AG04450 (cell line): ENCODE measurements at regions of chr17 and their contacts with region 1.

Region 1: GRCh38 chr17:27430882-27431491 is 25.3 kb upstream of the KSR1 start:
- DNase-seq: no peak
- H3K4me3 ChIP-seq: no peak overlapping the region
- H3K27ac ChIP-seq: no peak overlapping the region
- H3K27me3 ChIP-seq: no peaks in the 10 kb centered on the region
- CTCF ChIP-seq: peak; percentile 81

Region 2: GRCh38 chr17:27265333-27265732 is 165.7 kb before region 1 on chr17:
- CTCF ChIA-PET with region 1: no interaction called
- POLR2A ChIA-PET with region 1: no interaction called
- DNase-seq: no peak
- H3K4me3 ChIP-seq: no peak overlapping the region
- H3K27ac ChIP-seq: no peak overlapping the region
- H3K27me3 ChIP-seq: peaks cover 21% of the 10 kb centered on the region
- CTCF ChIP-seq: no peak

Region 3: DNA sequence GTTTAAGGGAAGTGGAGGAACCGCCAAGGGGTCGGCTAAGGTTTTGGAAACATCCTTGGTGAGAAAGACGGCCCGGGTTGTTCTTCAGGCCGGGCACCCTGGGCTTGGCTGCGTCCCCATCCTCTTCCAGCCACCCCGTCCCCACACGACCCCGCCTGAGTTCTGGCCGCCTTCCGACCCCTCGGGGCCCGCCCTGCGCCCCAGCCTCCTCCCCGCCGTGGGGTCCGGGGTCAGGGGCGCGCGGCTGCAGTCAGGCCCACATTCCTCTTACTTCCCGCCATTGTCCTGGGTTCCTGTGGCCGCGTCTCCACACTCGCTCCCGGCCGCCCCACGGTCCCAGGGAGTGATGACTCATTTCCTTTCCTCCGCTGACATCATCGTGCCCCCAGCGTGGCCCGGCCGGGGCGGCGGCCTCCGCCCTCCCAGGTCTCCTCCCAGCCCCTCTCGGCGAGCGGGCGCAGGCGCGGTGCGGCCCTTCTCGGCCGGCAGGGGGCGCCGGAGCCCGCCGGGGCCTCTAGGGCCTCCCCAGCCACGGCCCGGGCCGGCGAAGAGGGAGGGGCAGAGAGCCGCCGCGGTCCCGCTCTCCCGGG is 77.4 kb before region 1 on chr17:
- CTCF ChIA-PET with region 1: interaction called, 10 read pairs
- POLR2A ChIA-PET with region 1: no interaction called
- DNase-seq: peak; percentile 81
- H3K4me3 ChIP-seq: peak overlapping the region; percentile 69
- H3K27ac ChIP-seq: peak overlapping the region; percentile 78
- H3K27me3 ChIP-seq: peaks cover 3% of the 10 kb centered on the region
- CTCF ChIP-seq: peak; percentile 53

Region 4: GRCh38 chr17:27396941-27397340 is 34.0 kb before region 1 on chr17:
- CTCF ChIA-PET with region 1: no interaction called
- POLR2A ChIA-PET with region 1: no interaction called
- DNase-seq: no peak
- H3K4me3 ChIP-seq: no peak overlapping the region
- H3K27ac ChIP-seq: no peak overlapping the region
- H3K27me3 ChIP-seq: peaks cover 19% of the 10 kb centered on the region
- CTCF ChIP-seq: no peak

Region 5: GRCh38 chr17:27407916-27408846 is 22.8 kb before region 1 on chr17:
- CTCF ChIA-PET with region 1: interaction called, 13 read pairs
- POLR2A ChIA-PET with region 1: interaction called, 5 read pairs
- DNase-seq: no peak
- H3K4me3 ChIP-seq: no peak overlapping the region
- H3K27ac ChIP-seq: no peak overlapping the region
- H3K27me3 ChIP-seq: peaks cover under 1% of the 10 kb centered on the region
- CTCF ChIP-seq: 0 out of 2 replicates have a peak, but pooled peaks have one; percentile 12

Region 6: DNA sequence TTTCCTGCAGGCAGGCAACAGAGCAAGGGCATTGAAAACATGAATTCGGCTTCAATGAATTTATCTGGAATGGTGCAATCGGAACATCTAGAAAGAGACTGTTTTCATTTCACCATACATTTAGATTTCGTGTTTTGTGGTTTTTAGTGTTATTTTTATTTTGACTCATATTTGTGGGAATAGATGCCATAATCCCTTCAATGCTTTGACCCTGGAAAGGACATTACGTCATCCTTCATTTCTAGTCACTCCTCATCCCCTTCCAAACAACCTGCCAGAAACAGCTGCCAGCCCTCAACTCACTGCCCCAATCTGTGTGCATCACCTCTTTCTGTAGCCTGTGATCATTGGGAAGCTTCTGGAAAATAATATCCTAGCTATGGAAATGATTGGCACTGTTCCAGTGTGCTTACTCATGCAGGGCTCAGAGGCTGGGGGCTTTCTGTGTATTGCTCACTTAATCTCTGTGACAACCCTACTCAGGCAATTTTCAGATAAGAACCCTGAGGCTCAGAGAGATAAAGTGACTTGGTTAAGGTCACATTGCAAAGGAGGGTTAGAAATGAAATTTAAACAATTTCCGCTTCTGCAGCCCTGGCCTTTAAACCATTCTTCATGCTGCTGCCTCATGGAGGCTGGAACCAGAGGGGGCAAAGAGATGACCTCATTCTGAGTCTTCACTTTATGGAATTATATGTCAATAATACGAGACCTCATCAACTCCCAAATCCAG is 15.7 kb after region 1 on chr17:
- CTCF ChIA-PET with region 1: interaction called, 3 read pairs
- POLR2A ChIA-PET with region 1: interaction called, 13 read pairs
- DNase-seq: peak; percentile 99
- H3K4me3 ChIP-seq: no peak overlapping the region
- H3K27ac ChIP-seq: peak overlapping the region; percentile 68
- H3K27me3 ChIP-seq: peaks cover 2% of the 10 kb centered on the region
- CTCF ChIP-seq: no peak

Region 7: DNA sequence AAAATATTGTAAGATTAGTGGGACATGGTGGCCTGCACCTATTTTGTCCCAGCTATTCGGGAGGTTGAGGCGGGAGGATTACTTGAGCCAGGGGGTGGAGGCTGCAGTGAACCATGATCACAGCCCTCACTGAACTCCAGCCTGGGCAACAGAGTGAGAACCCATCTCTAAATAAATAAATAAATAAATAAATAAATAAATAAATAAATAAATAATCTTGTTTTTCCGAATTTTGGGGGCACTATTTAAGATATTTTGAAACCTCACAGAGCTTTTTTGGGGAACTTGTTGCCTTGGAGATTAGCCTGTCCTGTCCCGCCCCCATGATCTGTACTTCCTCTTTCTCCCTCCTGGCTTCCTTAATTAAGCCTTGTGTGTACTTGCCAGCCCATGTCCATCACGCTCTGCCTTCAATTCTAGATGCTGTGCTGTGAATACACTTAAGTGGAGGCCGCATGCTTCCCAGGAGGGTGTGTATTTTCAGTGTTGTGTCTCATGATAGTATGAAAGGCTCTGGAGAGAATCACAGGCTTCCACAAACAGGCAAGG is 204.4 kb after region 1 on chr17:
- CTCF ChIA-PET with region 1: no interaction called
- POLR2A ChIA-PET with region 1: no interaction called
- DNase-seq: no peak
- H3K4me3 ChIP-seq: no peak overlapping the region
- H3K27ac ChIP-seq: no peak overlapping the region
- H3K27me3 ChIP-seq: no peaks in the 10 kb centered on the region
- CTCF ChIP-seq: no peak